ENCODE measurements at regions of chr1 and their contacts with region 1.

Region 1: GRCh38 chr1:154520333-154520732 is 18.1 kb upstream of the SHE start:
- DNase-seq: no peak
- ATAC-seq: no peak
- H3K4me3 ChIP-seq: no peak overlapping the region
- H3K27ac ChIP-seq: no peak overlapping the region
- H3K4me1 ChIP-seq: no peaks in the 10 kb centered on the region
- H3K27me3 ChIP-seq: no peaks in the 10 kb centered on the region
- CTCF ChIP-seq: no peak
- POLR2A ChIP-seq: no peak

Region 2: DNA sequence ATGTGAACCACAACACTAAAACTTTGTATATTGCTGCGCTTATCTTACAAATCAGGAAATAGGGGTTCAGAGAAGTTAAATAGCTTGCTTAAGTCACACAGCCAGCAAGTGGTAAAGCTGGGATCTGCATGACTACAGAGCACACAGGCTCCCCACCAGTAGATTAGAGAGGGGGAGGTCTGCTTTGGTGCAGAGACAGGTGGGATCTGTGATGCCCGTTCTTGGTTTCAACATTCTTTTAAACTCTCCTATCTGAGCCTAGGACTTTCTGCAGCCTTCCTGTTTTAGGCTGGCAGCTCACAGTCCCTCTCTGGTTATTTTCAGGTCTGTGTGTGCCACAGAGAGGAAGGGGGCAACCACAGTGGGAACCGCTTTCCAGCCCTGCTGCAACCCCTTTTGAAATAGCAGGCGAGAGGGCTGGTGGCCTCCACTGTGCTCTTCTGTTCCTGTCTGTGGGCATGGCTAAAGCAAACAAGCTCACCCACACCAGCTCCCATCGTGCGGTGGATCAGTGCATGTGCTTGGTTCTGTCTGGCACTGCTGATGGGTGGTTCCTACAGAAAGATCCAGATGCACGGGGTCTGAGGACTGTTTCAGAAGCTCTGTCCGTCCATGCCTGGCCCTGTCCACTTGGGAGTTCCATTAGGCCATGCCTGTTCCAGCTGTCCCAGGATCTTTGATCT is 116.9 kb before region 1 on chr1:
- intact Hi-C with region 1: no loop called
- DNase-seq: peak in 1 of 4 donors; percentile 30
- ATAC-seq: no peak
- H3K4me3 ChIP-seq: no peak overlapping the region
- H3K27ac ChIP-seq: no peak overlapping the region
- H3K4me1 ChIP-seq: peaks cover 36% of the 10 kb centered on the region
- H3K27me3 ChIP-seq: no peaks in the 10 kb centered on the region
- CTCF ChIP-seq: no peak
- POLR2A ChIP-seq: no peak

Region 3: DNA sequence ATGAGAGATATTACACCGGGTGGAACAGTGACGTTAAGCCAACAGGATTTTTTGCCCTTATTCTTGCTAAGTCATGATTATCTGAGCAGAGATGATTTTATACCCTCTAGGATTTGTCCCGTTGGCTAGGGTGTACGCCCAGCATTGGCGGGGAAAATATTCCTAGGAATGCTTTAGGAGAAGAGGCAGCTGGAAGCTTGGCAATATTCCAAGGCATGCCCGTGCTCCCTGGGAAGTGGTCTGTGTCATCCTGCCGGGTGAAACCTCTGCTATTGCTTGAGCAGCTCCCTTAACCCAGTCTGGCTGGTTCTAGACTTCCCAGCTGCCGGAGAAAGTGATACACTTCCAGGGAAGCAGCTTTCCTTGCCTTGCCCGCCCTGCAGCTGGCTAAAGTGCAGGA is 63.4 kb after region 1 on chr1:
- intact Hi-C with region 1: loop called (anchors 10 kb)
- DNase-seq: no peak
- ATAC-seq: no peak
- H3K4me3 ChIP-seq: no peak overlapping the region
- H3K27ac ChIP-seq: no peak overlapping the region
- H3K4me1 ChIP-seq: no peaks in the 10 kb centered on the region
- H3K27me3 ChIP-seq: no peaks in the 10 kb centered on the region
- CTCF ChIP-seq: no peak
- POLR2A ChIP-seq: no peak

Region 4: GRCh38 chr1:155063550-155064110 is 543.3 kb after region 1 on chr1 and contains the start of gene EFNA4:
- intact Hi-C with region 1: no loop called
- DNase-seq: peak; percentile 85 to 89 (median 86)
- ATAC-seq: peak; percentile 90
- H3K4me3 ChIP-seq: peak within 1 kb of the TSS; percentile 49 to 56
- H3K27ac ChIP-seq: peak within 1 kb of the TSS; percentile 59 to 84 (median 76)
- H3K4me1 ChIP-seq: peaks cover 35% of the 10 kb centered on the region
- H3K27me3 ChIP-seq: no peaks in the 10 kb centered on the region
- CTCF ChIP-seq: no peak
- POLR2A ChIP-seq: peak; percentile 26 to 71 (median 67)
- total RNA-seq, gene EFNA4: 4.7 to 5.6 TPM